Activated CD4-positive, alpha-beta T cell treated with anti-CD3 and anti-CD28 coated beads for 36 hours (primary cell): ENCODE measurements at regions of chr2 and their contacts with region 1.

Region 1: GRCh38 chr2:239544143-239544917 is 143.5 kb upstream of the HDAC4 start:
- DNase-seq: peak; percentile 4
- ATAC-seq: no peak
- H3K4me3 Mint-ChIP-seq: no peak overlapping the region
- H3K27ac Mint-ChIP-seq: peak overlapping the region; percentile 83
- H3K4me1 Mint-ChIP-seq: peaks cover 50% of the 10 kb centered on the region
- H3K27me3 Mint-ChIP-seq: peaks cover 7% of the 10 kb centered on the region

Region 2: GRCh38 chr2:239433777-239434403 is 110.4 kb before region 1 on chr2:
- CTCF ChIA-PET with region 1: no interaction called
- POLR2A ChIA-PET with region 1: no interaction called
- intact Hi-C with region 1: loop called in 1 of 2 experiments (anchors 1 kb)
- DNase-seq: peak; percentile 52
- ATAC-seq: peak; percentile 100
- H3K4me3 Mint-ChIP-seq: no peak overlapping the region
- H3K27ac Mint-ChIP-seq: peak overlapping the region; percentile 26
- H3K4me1 Mint-ChIP-seq: peaks cover 11% of the 10 kb centered on the region
- H3K27me3 Mint-ChIP-seq: peaks cover 2% of the 10 kb centered on the region